OCI-LY7 (cell line): ENCODE measurements at regions of chr2 and their contacts with region 1.

Region 1: DNA sequence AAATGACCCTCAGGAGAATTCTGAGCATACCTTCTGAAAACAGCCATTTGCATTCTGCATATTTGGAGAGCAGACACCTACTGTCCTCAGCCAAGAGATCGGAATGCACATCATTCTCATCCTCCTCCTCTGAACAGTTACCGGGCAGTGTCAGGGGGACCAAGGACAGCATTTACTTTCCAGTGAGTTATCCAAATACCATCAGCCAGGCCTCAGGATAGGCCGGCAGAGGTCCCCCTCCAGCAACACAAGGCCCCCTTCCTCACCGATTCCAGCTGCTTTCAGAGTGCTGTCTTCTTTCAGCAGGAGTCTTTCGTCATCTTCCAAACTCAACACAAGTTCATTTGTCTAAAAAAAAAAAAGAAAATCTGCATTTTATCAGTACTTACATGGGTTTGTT is 55.3 kb downstream of the C2orf76 start:
- DNase-seq: peak; percentile 76
- H3K4me3 ChIP-seq: peak overlapping the region; percentile 62
- H3K27ac ChIP-seq: peak overlapping the region; percentile 95
- H3K4me1 ChIP-seq: peaks cover 52% of the 10 kb centered on the region
- CTCF ChIP-seq: peak; percentile 68

Region 2: DNA sequence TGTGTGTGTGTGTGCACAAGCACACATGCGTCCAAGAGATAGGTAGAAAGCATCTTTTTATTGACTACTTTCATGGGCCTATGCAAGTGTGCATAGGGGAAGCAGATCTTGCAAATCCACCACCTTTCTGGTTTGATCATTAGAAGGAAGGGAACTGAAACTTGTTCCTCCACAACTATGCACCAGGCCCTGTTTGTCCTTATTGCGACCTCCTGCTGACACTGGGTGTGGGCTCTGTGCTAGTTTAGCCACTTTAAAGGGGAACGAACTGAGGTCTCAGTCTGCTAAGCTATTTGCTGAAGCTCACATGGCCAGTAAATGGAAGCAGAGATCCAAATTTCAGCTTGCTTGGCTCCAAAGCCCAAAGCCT is 1255.2 kb before region 1 on chr2:
- CTCF ChIA-PET with region 1: no interaction called
- POLR2A ChIA-PET with region 1: interaction called, 5 read pairs
- intact Hi-C with region 1: loop called (anchors 10 kb)
- DNase-seq: peak; percentile 91
- H3K4me3 ChIP-seq: peak overlapping the region; percentile 60
- H3K27ac ChIP-seq: peak overlapping the region; percentile 94
- H3K4me1 ChIP-seq: peaks cover 68% of the 10 kb centered on the region
- CTCF ChIP-seq: no peak

Region 3: GRCh38 chr2:119234377-119235019 is 76.9 kb before region 1 on chr2:
- CTCF ChIA-PET with region 1: no interaction called
- POLR2A ChIA-PET with region 1: no interaction called
- intact Hi-C with region 1: loop called (anchors 2 kb)
- DNase-seq: peak; percentile 43
- H3K4me3 ChIP-seq: no peak overlapping the region
- H3K27ac ChIP-seq: no peak overlapping the region
- H3K4me1 ChIP-seq: no peaks in the 10 kb centered on the region
- CTCF ChIP-seq: peak; percentile 74

Region 4: GRCh38 chr2:119352357-119352756 is 41.0 kb after region 1 on chr2:
- CTCF ChIA-PET with region 1: interaction called, 20 read pairs
- POLR2A ChIA-PET with region 1: interaction called, 56 read pairs
- intact Hi-C with region 1: loop called (anchors 1 kb)
- DNase-seq: peak; percentile 97
- H3K4me3 ChIP-seq: peak overlapping the region; percentile 32
- H3K27ac ChIP-seq: peak overlapping the region; percentile 96
- H3K4me1 ChIP-seq: peaks cover 71% of the 10 kb centered on the region
- CTCF ChIP-seq: no peak

Region 5: GRCh38 chr2:119407430-119408220 is 96.3 kb after region 1 on chr2:
- CTCF ChIA-PET with region 1: no interaction called
- POLR2A ChIA-PET with region 1: interaction called, 3 read pairs
- intact Hi-C with region 1: loop called (anchors 1 kb)
- DNase-seq: peak; percentile 73
- H3K4me3 ChIP-seq: no peak overlapping the region
- H3K27ac ChIP-seq: no peak overlapping the region
- H3K4me1 ChIP-seq: peaks cover 21% of the 10 kb centered on the region
- CTCF ChIP-seq: peak; percentile 85

Region 6: DNA sequence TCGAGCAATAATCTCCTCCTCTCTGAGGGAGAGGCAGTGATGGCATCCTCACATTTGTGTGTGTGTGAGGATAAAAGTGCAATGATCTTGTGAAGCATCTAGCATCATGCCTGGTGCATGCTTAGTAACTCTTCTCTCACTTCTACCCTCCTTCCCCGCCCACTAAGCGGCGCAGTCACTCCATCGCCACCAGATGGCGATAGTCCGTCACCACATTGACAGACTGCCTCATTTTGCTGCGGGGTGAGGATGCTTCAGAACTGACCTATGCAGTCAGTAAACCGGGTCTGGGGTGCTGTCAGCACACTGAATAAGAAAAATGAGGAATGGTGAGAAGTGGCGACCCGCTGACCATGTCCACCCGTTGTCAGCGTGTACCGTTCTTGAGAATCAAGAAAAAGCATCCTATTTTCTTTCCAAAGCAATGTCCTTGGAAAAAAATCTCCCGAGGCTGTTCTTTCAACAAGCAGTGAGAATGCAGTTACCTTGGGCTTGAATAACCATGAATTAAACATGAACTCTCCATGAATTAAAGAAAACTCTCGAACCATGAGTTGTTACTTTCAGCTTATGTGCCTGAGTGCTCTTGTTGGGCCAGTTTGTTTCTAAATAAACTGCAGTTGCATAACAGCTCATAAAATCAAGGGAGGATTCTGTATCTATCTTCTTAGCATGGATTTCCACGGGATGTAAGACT is 330.4 kb after region 1 on chr2:
- CTCF ChIA-PET with region 1: no interaction called
- POLR2A ChIA-PET with region 1: no interaction called
- intact Hi-C with region 1: loop called (anchors 5 kb)
- DNase-seq: peak; percentile 81
- H3K4me3 ChIP-seq: no peak overlapping the region
- H3K27ac ChIP-seq: no peak overlapping the region
- H3K4me1 ChIP-seq: peaks cover 4% of the 10 kb centered on the region
- CTCF ChIP-seq: peak; percentile 96